H1 (cell line): ENCODE measurements at regions of chr11 and their contacts with region 1.

Region 1: DNA sequence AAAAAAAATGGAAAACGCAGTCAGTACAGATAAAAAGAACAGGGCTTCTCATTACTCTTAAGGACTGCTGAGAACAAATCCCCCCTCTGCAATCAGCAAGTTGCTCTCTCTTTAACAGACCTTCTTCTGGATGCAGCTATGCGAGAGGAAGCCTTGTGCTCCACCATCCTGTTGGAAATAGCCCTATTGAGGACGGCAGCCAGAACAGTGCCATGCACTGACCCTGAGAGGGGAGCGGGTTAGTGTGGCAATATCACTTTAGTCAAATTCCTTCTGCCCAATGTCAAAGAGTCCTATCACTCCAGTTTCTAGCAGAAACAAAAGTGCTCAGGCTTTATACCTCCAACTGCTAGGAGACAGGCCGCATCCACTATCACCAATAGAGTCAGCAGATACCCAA is 6.9 kb downstream of the RBM4B start:
- DNase-seq: no peak
- H3K4me3 ChIP-seq: no peak overlapping the region
- H3K27ac ChIP-seq: no peak overlapping the region
- H3K4me1 ChIP-seq: peaks cover 0 to 3% (median 0%) of the 10 kb centered on the region in 4 experiments; a peak in 1 of 7 replicates
- H3K27me3 ChIP-seq: no peaks in the 10 kb centered on the region
- CTCF ChIP-seq: no peak
- EP300 ChIP-seq: no peak
- POLR2A ChIP-seq: 0 out of 3 replicates have a peak, but pooled peaks of 1 of the 2 experiments have one; percentile 20
- RAD21 ChIP-seq: no peak

Region 2: GRCh38 chr11:66659763-66660162 is 11.1 kb before region 1 on chr11:
- CTCF ChIA-PET with region 1: interaction called, 3 read pairs
- POLR2A ChIA-PET with region 1: interaction called, 24 read pairs
- DNase-seq: no peak
- H3K4me3 ChIP-seq: no peak overlapping the region
- H3K27ac ChIP-seq: no peak overlapping the region
- H3K4me1 ChIP-seq: no peaks in the 10 kb centered on the region
- H3K27me3 ChIP-seq: no peaks in the 10 kb centered on the region
- CTCF ChIP-seq: no peak
- EP300 ChIP-seq: no peak
- POLR2A ChIP-seq: no peak
- RAD21 ChIP-seq: no peak